ENCODE measurements at regions of chr2 and their contacts with region 1.

Region 1: GRCh38 chr2:168961450-168962229 is 60.5 kb downstream of the G6PC2 start:
- DNase-seq: no peak

Region 2: DNA sequence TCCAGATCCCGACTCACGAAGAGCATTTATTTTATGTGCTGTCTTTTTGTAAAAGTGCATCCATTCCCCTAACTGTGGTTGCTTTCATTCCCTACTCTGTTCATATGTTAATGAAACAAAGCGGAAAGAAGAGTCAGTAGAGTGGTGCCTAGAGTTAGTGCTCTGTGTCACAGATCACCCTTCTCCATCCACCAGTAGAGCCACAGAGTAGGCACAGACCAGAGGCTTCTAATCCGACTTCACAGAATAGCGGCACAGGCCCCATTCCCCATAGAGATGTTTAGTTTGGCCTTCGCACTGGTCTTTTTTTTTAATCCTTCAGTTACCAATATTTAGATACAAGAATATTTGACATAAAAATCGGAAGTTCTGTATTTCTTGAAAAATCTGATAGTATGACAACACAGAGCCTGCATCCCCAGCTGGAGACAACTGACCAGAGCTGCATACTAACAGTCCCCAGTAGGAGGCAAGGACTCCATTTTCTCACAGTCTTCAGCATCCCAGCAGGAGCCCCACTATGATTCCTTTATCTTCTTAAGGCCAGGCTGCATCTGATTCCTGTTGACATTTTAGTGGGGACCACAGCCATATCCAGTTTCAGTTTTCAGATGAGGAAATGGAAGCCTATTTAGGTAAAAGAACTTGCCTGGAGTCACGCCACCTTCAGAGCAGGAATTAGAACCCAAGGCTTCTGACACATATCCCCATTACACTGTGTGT is 53.5 kb before region 1 on chr2:
- intact Hi-C with region 1: no loop called
- DNase-seq: no peak

Region 3: GRCh38 chr2:169131587-169132512 is 170.2 kb after region 1 on chr2:
- intact Hi-C with region 1: loop called in 1 of 2 experiments (anchors 10 kb)
- DNase-seq: no peak